ENCODE measurements at regions of chr21 and their contacts with region 1.

Region 1: GRCh38 chr21:36113647-36114428 is 21.0 kb upstream of the CBR3 start:
- DNase-seq: peak; percentile 77
- H3K4me3 ChIP-seq: peak overlapping the region in 6 of 8 donors; percentile 14 to 65 (median 40)
- H3K27ac ChIP-seq: peak overlapping the region in 7 of 8 donors; percentile 19 to 81 (median 76)
- H3K4me1 ChIP-seq: peaks cover 0 to 37% (median 16%) of the 10 kb centered on the region in 6 donors
- H3K27me3 ChIP-seq: no peaks in the 10 kb centered on the region
- CTCF ChIP-seq: no peak
- POLR2A ChIP-seq: no peak

Region 2: GRCh38 chr21:36060159-36060921 is 53.5 kb before region 1 on chr21 and contains the start of gene SETD4:
- intact Hi-C with region 1: loop called (anchors 5 kb)
- DNase-seq: peak; percentile 97
- H3K4me3 ChIP-seq: peak within 1 kb of the TSS; percentile 72 to 99 (median 97)
- H3K27ac ChIP-seq: peak within 1 kb of the TSS; percentile 86 to 97 (median 92)
- H3K4me1 ChIP-seq: peaks cover 8 to 38% (median 23%) of the 10 kb centered on the region in 6 donors
- H3K27me3 ChIP-seq: no peaks in the 10 kb centered on the region
- CTCF ChIP-seq: peak in 1 of 11 experiments; percentile 5
- POLR2A ChIP-seq: peak in 2 of 3 donors; percentile 47 to 76
- total RNA-seq, gene SETD4: 18.2 to 28.1 (median 23.2) TPM

Measured in spleen (tissue), 13 donors.